ENCODE measurements at regions of chr15 and their contacts with region 1.

Region 1: DNA sequence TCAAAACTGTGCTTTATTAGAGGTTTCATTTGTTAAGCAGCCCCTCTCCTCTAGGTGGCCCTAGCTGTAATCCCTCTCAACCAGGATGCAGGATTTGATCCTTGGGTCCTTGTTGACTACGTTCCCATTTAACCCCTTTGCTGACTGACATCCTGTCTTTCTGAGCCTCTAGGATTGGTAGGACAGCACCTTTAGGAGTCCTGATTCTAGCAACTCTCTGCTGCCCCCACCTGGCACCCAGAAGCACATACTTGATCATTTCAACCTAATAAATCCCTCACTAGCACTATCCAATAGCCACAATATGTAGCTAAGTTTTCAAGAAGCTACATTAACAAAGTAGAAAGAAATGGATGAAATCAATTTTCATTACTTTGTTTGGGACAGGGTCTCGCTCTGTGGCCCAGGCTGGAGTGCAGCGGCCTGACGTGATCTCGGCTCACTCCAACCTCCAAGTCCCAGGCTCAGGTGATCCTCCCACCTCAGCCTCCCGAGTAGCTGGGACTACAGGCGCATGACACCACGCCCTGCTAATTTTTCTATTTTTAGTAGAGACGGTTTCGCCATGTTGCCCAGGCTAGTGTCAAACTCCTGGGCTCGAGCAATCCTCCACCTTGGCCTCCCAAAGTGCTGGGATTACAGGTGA is 28.3 kb downstream of the RSL24D1 start:
- DNase-seq: peak; percentile 59
- H3K4me3 ChIP-seq: no peak overlapping the region; a peak in 1 of 4 replicates
- H3K27ac ChIP-seq: no peak overlapping the region
- H3K4me1 ChIP-seq: no peaks in the 10 kb centered on the region
- H3K27me3 ChIP-seq: no peaks in the 10 kb centered on the region
- CTCF ChIP-seq: peak; percentile 92
- EP300 ChIP-seq: no peak
- RAD21 ChIP-seq: peak; percentile 76

Region 2: DNA sequence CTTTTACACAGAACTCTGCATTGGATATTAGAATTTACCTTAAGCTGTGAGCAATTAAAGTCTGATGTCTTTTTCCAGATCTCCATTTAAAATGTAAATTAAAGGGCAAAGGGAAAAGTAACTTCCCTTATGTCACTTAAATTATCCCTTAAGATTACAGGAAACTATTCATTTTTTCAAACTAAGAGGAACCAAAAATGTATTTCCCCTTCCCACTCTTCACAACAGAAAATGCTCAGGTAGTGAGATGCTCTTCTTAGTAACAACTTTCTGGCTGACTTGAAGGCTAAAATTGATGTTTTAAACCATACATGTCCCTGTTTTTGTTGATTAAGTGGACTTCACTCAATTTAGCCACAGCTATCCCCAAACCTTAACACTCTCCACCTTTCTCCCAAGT is 10.7 kb after region 1 on chr15:
- CTCF ChIA-PET with region 1: interaction called, 19 read pairs
- POLR2A ChIA-PET with region 1: no interaction called
- DNase-seq: no peak
- H3K4me3 ChIP-seq: no peak overlapping the region
- H3K27ac ChIP-seq: no peak overlapping the region; a peak in 1 of 4 replicates
- H3K4me1 ChIP-seq: no peaks in the 10 kb centered on the region; a peak in 2 of 4 replicates
- H3K27me3 ChIP-seq: no peaks in the 10 kb centered on the region
- CTCF ChIP-seq: no peak
- EP300 ChIP-seq: no peak
- RAD21 ChIP-seq: no peak